ENCODE measurements at regions of chr11 and their contacts with region 1.

Region 1: GRCh38 chr11:70202898-70203748 is at the start of gene FADD:
- DNase-seq: peak; percentile 92 to 97 (median 92)
- H3K4me3 ChIP-seq: peak within 1 kb of the TSS; percentile 81 to 94 (median 83)
- H3K4me3 Mint-ChIP-seq: peak within 1 kb of the TSS; percentile 89 to 96
- H3K27ac ChIP-seq: peak within 1 kb of the TSS; percentile 86 to 95
- H3K27ac Mint-ChIP-seq: peak within 1 kb of the TSS; percentile 94 to 99 (median 96)
- H3K4me1 ChIP-seq: peaks cover 26 to 36% of the 10 kb centered on the region in 2 donors
- H3K4me1 Mint-ChIP-seq: peaks cover 40% of the 10 kb centered on the region
- H3K27me3 ChIP-seq: peaks cover 0 to 2% of the 10 kb centered on the region in 2 donors
- H3K27me3 Mint-ChIP-seq: peaks cover 11 to 21% (median 11%) of the 10 kb centered on the region in 3 donors
- CTCF ChIP-seq: no peak
- polyA plus RNA-seq, gene FADD: 5.4 to 9.5 (median 7.7) TPM

Region 2: DNA sequence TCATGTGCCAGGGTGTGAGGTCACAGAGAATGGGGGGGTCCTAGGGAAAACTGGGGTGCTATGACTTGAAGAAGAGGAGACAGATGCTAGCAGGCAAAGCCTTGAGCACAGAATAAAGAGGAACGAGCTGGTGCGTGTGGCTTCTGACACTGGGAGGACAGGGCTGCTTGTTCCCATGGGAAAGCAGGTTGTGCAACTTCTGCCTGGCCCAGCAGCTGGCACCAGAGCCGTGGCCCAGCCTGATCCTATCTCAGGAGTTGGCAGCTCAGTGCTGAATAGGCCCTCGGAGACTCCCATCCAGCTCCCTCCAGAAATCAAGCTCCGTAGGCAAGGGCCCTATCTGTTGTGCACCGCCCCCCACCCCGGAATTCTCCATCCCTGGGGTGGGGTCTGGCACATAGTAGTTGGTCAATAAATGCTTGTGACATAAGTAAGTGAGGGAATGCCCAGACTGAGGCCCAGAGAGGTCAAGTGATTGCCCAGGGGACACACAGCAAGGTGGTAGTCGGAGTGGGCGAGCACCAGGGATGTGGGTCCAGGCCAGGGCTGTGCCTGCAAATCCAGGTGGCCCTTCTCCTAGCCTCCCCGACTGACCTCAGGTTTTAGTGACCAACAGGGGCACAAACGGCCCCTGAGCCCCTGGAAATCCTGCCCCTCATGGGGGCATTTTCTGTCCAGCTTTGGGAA is 19.5 kb before region 1 on chr11:
- intact Hi-C with region 1: no loop called
- DNase-seq: no peak
- H3K4me3 ChIP-seq: no peak overlapping the region
- H3K4me3 Mint-ChIP-seq: no peak overlapping the region
- H3K27ac ChIP-seq: no peak overlapping the region
- H3K27ac Mint-ChIP-seq: no peak overlapping the region
- H3K4me1 ChIP-seq: no peaks in the 10 kb centered on the region
- H3K4me1 Mint-ChIP-seq: no peaks in the 10 kb centered on the region
- H3K27me3 ChIP-seq: no peaks in the 10 kb centered on the region
- H3K27me3 Mint-ChIP-seq: peaks cover 3 to 15% (median 3%) of the 10 kb centered on the region in 3 donors
- CTCF ChIP-seq: no peak

Region 3: GRCh38 chr11:70270104-70270876 is 67.2 kb after region 1 on chr11 and contains the start of gene PPFIA1:
- intact Hi-C with region 1: loop called (anchors 2 to 5 kb)
- DNase-seq: peak; percentile 92 to 93 (median 92)
- H3K4me3 ChIP-seq: peak within 1 kb of the TSS; percentile 86 to 97 (median 88)
- H3K4me3 Mint-ChIP-seq: peak within 1 kb of the TSS; percentile 92 to 95
- H3K27ac ChIP-seq: peak within 1 kb of the TSS; percentile 44 to 81
- H3K27ac Mint-ChIP-seq: peak within 1 kb of the TSS; percentile 64 to 94 (median 85)
- H3K4me1 ChIP-seq: peaks cover 20 to 28% of the 10 kb centered on the region in 2 donors
- H3K4me1 Mint-ChIP-seq: peaks cover 24% of the 10 kb centered on the region
- H3K27me3 ChIP-seq: peaks cover 4 to 11% of the 10 kb centered on the region in 2 donors
- H3K27me3 Mint-ChIP-seq: peaks cover 27 to 39% (median 36%) of the 10 kb centered on the region in 3 donors
- CTCF ChIP-seq: no peak
- polyA plus RNA-seq, gene PPFIA1: 7.5 to 65.7 (median 15.5) TPM

Region 4: DNA sequence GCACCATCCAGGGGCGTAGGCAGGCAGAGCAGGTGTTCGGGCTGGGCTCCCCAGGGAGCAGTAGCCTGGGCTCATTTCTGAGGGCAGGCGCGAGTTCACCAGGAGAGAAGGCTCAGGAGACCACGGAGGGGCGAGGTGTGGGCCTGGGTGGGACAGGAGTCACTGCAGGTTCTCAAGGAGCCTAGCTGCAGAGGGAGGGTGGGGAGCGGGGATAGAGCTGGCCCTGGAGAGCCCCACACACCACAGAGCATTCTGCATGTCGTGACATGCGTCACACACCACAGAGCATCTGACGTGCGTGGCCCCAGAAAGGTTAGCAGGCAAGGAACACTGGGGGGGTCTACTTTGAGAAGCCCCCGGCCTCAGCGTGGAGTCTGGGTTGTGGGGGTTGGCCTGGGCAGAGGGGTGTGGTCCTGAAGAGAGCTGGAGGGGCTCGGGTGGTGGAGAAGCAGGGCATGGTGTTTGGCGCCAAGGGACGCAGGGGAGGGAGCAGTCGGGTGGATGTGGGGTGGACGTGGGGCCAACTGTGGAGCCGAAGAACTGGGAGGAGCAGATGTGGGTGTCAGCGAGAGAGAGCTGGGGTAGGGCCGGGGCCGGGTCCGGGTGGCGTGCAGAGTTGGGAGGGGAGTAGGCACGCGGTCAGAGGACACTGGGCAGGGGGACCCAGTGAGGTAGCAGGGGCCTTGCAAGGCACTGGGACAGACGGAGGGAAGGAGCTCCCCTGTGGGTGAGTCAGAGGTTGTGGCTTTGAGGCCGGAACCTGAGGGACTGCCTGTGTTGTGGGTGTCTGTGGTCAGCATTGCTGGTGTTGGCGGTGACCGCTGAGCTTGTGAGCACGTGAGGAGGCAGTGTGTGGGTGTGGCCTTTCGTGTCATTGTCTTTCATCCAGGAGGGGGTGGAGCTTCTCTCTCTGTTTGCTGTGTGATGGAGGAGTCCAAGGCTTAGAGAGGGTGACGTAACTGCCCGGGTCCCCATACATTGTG is 220.7 kb after region 1 on chr11:
- intact Hi-C with region 1: loop called in 1 of 2 experiments (anchors 10 kb)
- DNase-seq: peak; percentile 72 to 93 (median 74)
- H3K4me3 ChIP-seq: no peak overlapping the region
- H3K4me3 Mint-ChIP-seq: peak overlapping the region in 1 of 2 donors; percentile 68
- H3K27ac ChIP-seq: no peak overlapping the region
- H3K27ac Mint-ChIP-seq: peak overlapping the region in 6 of 7 donors; percentile 15 to 84 (median 62)
- H3K4me1 ChIP-seq: peaks cover 10 to 12% of the 10 kb centered on the region in 2 donors
- H3K4me1 Mint-ChIP-seq: peaks cover 11% of the 10 kb centered on the region
- H3K27me3 ChIP-seq: peaks cover 9 to 92% of the 10 kb centered on the region in 2 donors
- H3K27me3 Mint-ChIP-seq: peaks cover 69 to 96% (median 91%) of the 10 kb centered on the region in 3 donors
- CTCF ChIP-seq: no peak